Activated CD4-positive, alpha-beta memory T cell treated with anti-CD3 and anti-CD28 coated beads for 36 hours (primary cell): ENCODE measurements at regions of chr6 and their contacts with region 1.

Region 1: DNA sequence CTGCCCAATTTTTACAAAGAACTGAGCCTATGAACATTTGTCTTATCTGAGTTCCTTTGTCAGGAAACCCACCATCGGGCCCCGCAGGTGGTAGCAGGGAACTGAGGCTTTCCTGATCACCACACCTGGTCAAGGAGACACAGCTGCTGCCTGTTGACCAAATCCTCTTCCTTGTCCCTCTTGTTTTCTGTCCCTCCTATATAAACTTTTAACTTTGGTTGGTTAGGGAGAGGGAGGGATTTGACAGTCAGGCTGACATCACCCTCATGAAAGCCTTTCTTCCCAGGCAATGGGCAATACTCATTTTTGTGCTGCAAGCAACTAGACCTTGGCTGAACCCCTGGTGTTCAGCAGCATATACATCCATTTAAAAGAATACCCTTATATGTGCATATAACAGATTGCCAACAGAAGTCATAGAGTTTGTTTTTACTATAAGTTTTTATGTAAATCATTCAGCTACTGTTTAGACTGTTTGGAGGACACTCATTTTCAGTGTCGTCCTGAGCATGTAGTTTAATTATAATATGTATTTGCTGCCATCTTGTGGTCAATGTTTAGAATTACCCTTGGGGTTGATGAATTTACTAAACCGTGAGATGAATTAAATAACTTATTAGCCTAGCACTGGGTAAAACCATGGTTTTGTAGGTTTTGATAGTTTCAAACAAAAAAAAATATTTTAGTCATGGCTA is 17.0 kb downstream of the CRISP1 start:
- DNase-seq: no peak
- H3K4me3 Mint-ChIP-seq: no peak overlapping the region
- H3K27ac Mint-ChIP-seq: no peak overlapping the region
- H3K4me1 Mint-ChIP-seq: no peaks in the 10 kb centered on the region
- H3K27me3 Mint-ChIP-seq: no peaks in the 10 kb centered on the region

Region 2: GRCh38 chr6:49606696-49607390 is 242.5 kb before region 1 on chr6:
- CTCF ChIA-PET with region 1: no interaction called
- POLR2A ChIA-PET with region 1: no interaction called
- intact Hi-C with region 1: loop called (anchors 1 kb)
- DNase-seq: no peak
- H3K4me3 Mint-ChIP-seq: no peak overlapping the region
- H3K27ac Mint-ChIP-seq: no peak overlapping the region
- H3K4me1 Mint-ChIP-seq: no peaks in the 10 kb centered on the region
- H3K27me3 Mint-ChIP-seq: peaks cover 6% of the 10 kb centered on the region

Region 3: DNA sequence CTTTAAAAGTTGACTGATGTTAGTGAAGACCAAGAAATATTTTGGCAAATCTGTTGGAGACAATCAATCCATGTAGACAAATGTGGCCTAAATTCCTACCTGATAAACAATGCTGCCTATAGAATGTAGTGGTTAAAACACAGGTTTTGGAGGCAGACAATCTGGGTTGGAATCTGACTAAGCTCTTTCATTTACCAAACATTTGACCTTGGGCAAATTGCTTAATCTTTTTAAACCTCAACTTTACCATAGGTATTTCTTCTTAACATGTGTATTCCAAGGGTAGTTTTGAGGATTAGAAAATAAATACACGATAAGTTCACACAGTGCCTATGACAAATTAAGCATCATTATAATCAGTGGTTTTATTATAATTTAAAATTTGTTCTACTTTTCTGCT is 224.2 kb before region 1 on chr6:
- CTCF ChIA-PET with region 1: interaction called, 5 read pairs
- POLR2A ChIA-PET with region 1: no interaction called
- intact Hi-C with region 1: loop called (anchors 1 kb)
- DNase-seq: no peak
- H3K4me3 Mint-ChIP-seq: no peak overlapping the region
- H3K27ac Mint-ChIP-seq: no peak overlapping the region
- H3K4me1 Mint-ChIP-seq: no peaks in the 10 kb centered on the region
- H3K27me3 Mint-ChIP-seq: peaks cover 1% of the 10 kb centered on the region